ENCODE measurements at regions of chr7 and their contacts with region 1.

Region 1: GRCh38 chr7:47088329-47089067 is 493.4 kb downstream of the TNS3 start:
- ATAC-seq: peak; percentile 72 to 96 (median 78)
- H3K4me3 ChIP-seq: no peak overlapping the region
- H3K27ac ChIP-seq: no peak overlapping the region
- H3K4me1 ChIP-seq: no peaks in the 10 kb centered on the region

Region 2: DNA sequence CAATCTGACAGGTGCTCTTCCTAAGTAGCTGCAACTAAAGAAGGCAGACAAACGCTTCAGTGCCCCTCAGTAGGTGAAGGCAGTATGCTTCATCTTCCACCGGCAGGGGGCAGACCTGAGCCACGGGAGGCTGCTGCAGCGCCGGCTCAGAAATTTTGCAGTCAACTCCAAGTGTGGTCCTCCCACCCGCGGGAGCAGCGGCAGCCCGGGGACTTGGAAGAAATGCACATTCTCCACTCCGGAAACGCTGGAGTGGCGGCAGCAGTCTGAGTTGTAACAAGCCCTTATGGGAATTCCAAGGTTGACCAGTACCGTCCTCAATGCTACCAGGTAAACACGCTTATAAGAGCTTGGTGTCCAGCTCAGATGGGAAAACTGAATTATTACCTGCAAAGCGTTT is 1170.8 kb before region 1 on chr7:
- in situ Hi-C with region 1: loop called in 8 of 9 experiments (anchors 10 to 25 kb)
- ATAC-seq: peak in 4 of 8 experiments; percentile 13 to 72 (median 40)
- H3K4me3 ChIP-seq: no peak overlapping the region
- H3K27ac ChIP-seq: no peak overlapping the region
- H3K4me1 ChIP-seq: no peaks in the 10 kb centered on the region

Region 3: DNA sequence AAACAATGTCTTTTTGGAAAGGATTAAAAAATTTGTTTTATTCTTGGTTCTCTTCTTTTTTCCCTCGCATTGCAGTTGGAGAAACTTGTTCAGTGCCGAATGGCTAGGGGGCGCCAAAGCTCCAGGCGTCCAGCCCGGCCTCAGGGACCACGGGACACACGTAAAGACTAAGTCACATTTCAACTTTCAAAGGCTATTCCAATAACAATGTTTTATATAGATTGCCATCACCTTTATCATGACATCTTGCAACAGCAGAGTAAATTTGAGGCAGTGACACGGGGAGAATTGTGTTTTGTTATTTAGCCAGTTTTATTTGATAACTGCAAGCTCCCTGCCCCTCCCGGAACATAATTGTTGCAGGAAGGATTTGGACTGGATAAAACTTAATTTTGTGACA is 1165.2 kb before region 1 on chr7:
- in situ Hi-C with region 1: loop called in 8 of 9 experiments (anchors 10 to 25 kb)
- ATAC-seq: peak in 3 of 8 experiments; percentile 8 to 42 (median 19)
- H3K4me3 ChIP-seq: no peak overlapping the region
- H3K27ac ChIP-seq: no peak overlapping the region
- H3K4me1 ChIP-seq: no peaks in the 10 kb centered on the region

Region 4: DNA sequence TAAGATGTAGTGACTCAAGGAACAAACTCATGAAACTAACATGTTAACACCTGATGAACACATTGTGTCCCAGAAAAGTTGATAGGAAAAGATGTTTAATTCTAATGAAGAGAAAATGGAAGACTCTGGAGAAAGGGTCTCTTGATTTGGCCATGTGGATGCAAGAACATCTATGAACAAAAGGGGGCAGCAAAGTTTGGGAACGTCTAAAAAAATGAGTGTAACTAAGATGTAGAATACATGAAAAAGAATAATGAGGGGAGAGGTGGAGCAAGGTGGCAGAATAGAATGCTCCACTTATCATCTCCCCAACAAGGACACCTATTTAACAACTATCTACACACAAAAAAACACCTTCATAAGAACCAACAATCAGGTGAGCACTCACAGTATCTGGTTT is 311.7 kb before region 1 on chr7:
- in situ Hi-C with region 1: loop called in 1 of 9 experiments (anchors 25 kb)
- ATAC-seq: no peak
- H3K4me3 ChIP-seq: no peak overlapping the region
- H3K27ac ChIP-seq: no peak overlapping the region
- H3K4me1 ChIP-seq: no peaks in the 10 kb centered on the region

Measured in motor neuron (in vitro differentiated cells).